ENCODE measurements at regions of chr10 and their contacts with region 1.

Region 1: DNA sequence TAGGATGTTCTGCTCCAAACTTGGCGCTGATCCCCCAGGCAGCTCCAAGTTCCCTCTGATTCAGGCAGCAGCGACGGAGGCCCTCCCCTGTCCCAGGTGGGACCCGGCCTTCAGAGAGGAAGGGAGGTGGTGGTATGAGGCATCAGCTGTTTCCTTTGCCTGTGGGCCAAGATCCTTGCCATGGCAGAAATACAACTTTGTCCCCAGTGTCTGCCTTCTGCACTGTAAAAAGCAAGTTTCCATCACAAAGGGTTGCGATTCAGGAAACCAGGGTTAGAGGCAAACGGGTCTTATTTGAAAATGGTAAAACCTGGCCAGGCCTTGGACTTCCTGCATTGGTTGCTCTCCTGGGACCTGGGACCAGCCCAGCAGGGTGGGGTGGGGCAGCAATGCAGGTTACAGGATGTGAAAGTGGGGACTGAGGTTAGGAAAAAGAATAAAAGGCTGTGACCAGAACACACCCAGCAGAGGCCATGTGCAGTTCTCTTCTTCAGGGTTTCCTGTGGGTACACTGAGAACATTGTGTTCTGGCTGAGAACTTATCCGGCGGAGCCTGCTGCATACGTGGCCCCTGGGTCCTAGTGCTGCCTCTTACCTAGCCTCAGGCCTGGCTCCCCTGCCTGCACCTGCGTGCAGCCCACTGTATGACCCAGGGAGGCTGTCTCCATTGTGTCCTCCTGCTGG is 25.1 kb upstream of the DDIT4 start:
- DNase-seq: peak; percentile 57 to 89 (median 80)
- H3K4me3 ChIP-seq: peak overlapping the region in 6 of 7 experiments; percentile 23 to 46 (median 39)
- H3K27ac ChIP-seq: peak overlapping the region in 1 of 2 experiments; percentile 47
- H3K4me1 ChIP-seq: peaks cover 17 to 51% (median 29%) of the 10 kb centered on the region in 4 experiments
- H3K27me3 ChIP-seq: no peaks in the 10 kb centered on the region

Region 2: GRCh38 chr10:72229261-72230251 is 19.1 kb before region 1 on chr10:
- CTCF ChIA-PET with region 1: interaction called, 11 read pairs
- POLR2A ChIA-PET with region 1: interaction called, 5 read pairs
- DNase-seq: no peak
- H3K4me3 ChIP-seq: no peak overlapping the region
- H3K27ac ChIP-seq: peak overlapping the region in 1 of 2 experiments; percentile 0
- H3K4me1 ChIP-seq: peaks cover 0 to 2% (median 1%) of the 10 kb centered on the region in 4 experiments
- H3K27me3 ChIP-seq: no peaks in the 10 kb centered on the region

Region 3: GRCh38 chr10:72238392-72239175 is 10.0 kb before region 1 on chr10:
- CTCF ChIA-PET with region 1: interaction called, 15 read pairs
- POLR2A ChIA-PET with region 1: interaction called, 3 read pairs
- DNase-seq: no peak
- H3K4me3 ChIP-seq: no peak overlapping the region
- H3K27ac ChIP-seq: no peak overlapping the region
- H3K4me1 ChIP-seq: peaks cover 0 to 6% (median 3%) of the 10 kb centered on the region in 4 experiments
- H3K27me3 ChIP-seq: no peaks in the 10 kb centered on the region